B cell (primary cell): ENCODE measurements at regions of chr3 and their contacts with region 1.

Region 1: DNA sequence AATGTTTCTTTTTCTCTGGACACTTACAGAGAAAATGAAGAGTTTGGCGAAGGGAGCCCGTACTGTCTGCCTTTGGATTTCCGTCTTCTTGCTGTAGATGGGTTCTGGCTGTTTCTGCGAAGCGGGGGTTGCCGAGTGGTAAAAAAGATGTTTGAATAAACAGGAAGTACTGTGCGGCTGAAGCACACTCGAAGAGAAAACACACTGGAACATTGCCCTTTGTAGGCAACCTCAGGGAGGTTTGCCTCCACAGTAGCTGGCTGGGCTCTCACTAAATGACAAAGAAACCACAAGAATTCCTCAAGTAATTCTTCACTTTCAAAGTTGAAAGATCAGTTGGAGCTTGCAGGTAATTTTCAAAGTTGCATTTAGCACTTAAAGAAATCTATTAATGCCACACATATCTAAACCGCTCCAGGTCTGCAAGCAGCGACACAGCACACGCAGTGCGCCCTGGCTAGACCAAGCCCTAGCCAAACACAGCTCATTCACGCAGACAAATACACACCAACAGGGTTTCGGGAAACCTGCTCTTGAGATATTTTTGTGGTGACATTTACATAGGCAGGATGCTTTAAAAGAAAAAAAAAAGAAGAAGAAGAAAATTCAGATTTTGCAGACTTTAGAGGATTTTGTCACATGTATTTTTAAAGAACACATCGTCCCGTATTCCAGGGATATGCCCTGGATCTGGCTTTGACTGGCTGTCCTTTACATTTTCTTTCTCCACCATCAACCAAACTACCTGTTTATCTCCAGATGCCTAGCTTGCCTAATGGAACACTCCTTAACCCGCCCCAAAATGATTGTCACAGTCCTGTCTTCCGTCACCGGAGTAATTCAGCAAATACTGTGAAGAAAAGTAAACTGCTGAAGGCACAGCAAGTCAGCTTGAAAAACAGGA is 452.8 kb downstream of the FOXP1 start:
- DNase-seq: peak; percentile 81
- ATAC-seq: peak; percentile 76
- H3K4me3 ChIP-seq: peak overlapping the region; percentile 53 to 91 (median 71)
- H3K4me3 Mint-ChIP-seq: peak overlapping the region; percentile 93
- H3K27ac ChIP-seq: peak overlapping the region; percentile 72 to 91
- H3K27ac Mint-ChIP-seq: peak overlapping the region; percentile 94
- H3K4me1 ChIP-seq: peaks cover 51 to 64% of the 10 kb centered on the region in 2 donors
- H3K4me1 Mint-ChIP-seq: peaks cover 68% of the 10 kb centered on the region
- H3K27me3 ChIP-seq: no peaks in the 10 kb centered on the region
- H3K27me3 Mint-ChIP-seq: no peaks in the 10 kb centered on the region
- CTCF ChIP-seq: no peak

Region 2: DNA sequence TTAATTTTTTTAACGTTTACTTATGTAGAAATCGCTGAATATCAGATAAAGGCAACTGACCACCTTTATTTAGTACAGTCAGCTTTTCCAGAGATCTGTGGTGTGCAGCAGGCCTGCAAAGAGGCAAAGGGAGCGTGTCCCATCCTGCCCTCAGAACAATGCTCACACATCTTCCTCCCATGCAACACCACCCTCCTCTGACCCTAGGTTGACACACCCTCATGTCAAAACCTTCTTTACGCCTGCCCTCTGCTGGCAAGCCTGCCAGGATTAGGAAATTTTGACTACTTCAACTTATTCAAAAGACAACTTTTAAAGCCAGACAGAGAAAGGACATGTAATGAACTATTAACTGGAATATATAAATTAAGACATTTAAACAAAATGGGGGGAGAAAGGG is 60.9 kb before region 1 on chr3:
- CTCF ChIA-PET with region 1: interaction called, 12 read pairs
- POLR2A ChIA-PET with region 1: interaction called, 3 read pairs
- intact Hi-C with region 1: loop called (anchors 1 kb)
- DNase-seq: peak; percentile 83
- ATAC-seq: peak; percentile 48
- H3K4me3 ChIP-seq: no peak overlapping the region
- H3K4me3 Mint-ChIP-seq: peak overlapping the region; percentile 69
- H3K27ac ChIP-seq: peak overlapping the region; percentile 25 to 77
- H3K27ac Mint-ChIP-seq: peak overlapping the region; percentile 84
- H3K4me1 ChIP-seq: peaks cover 55 to 67% of the 10 kb centered on the region in 2 donors
- H3K4me1 Mint-ChIP-seq: peaks cover 79% of the 10 kb centered on the region
- H3K27me3 ChIP-seq: no peaks in the 10 kb centered on the region
- H3K27me3 Mint-ChIP-seq: no peaks in the 10 kb centered on the region
- CTCF ChIP-seq: peak; percentile 78

Region 3: GRCh38 chr3:71117572-71118247 is 13.0 kb before region 1 on chr3:
- CTCF ChIA-PET with region 1: interaction called, 4 read pairs
- POLR2A ChIA-PET with region 1: interaction called, 5 read pairs
- intact Hi-C with region 1: loop called (anchors 1 kb)
- DNase-seq: peak; percentile 47
- ATAC-seq: peak; percentile 66
- H3K4me3 ChIP-seq: no peak overlapping the region
- H3K4me3 Mint-ChIP-seq: peak overlapping the region; percentile 80
- H3K27ac ChIP-seq: peak overlapping the region in 1 of 2 donors; percentile 73
- H3K27ac Mint-ChIP-seq: peak overlapping the region; percentile 93
- H3K4me1 ChIP-seq: peaks cover 28 to 31% of the 10 kb centered on the region in 2 donors
- H3K4me1 Mint-ChIP-seq: peaks cover 81% of the 10 kb centered on the region
- H3K27me3 ChIP-seq: no peaks in the 10 kb centered on the region
- H3K27me3 Mint-ChIP-seq: no peaks in the 10 kb centered on the region
- CTCF ChIP-seq: no peak

Region 4: DNA sequence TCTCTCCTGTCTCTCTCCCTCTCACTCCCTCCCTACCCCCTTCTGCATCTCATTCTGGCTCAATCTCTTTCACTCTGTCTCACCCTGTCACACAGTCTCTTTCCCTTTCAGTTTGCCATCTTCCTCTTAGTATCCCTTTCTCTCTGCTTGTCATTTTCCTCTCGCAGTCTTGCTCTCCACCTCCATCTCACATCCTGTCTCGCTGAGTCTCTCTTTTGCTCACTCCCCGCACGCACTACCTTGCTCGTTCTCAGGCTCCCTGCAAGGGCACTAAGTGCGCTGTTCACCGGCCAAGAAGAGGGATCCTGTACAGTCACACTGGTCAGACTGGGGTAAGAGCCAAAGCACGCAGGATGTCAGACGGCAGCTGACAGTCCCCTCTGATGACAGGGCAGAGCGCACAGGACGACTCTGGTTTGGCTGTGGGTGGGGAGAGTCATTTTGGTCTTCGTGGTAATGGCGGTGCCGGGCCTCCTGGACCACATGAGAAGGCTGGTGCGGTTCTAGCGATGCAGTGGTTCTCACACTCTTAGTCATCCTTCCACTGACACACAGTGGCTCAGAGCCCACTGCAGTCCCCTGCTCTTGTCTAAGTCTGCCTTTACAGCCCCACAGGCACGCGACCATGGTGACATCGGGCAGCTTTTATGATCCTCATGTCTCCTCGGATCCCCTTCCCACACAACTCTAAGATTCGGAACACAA is 96.0 kb after region 1 on chr3:
- CTCF ChIA-PET with region 1: interaction called, 3 read pairs
- POLR2A ChIA-PET with region 1: no interaction called
- intact Hi-C with region 1: loop called (anchors 2 kb)
- DNase-seq: peak; percentile 60
- ATAC-seq: peak; percentile 69
- H3K4me3 ChIP-seq: peak overlapping the region in 4 of 5 experiments; percentile 19 to 52 (median 40)
- H3K4me3 Mint-ChIP-seq: peak overlapping the region; percentile 91
- H3K27ac ChIP-seq: peak overlapping the region; percentile 67 to 93
- H3K27ac Mint-ChIP-seq: peak overlapping the region; percentile 90
- H3K4me1 ChIP-seq: peaks cover 32 to 34% of the 10 kb centered on the region in 2 donors
- H3K4me1 Mint-ChIP-seq: peaks cover 64% of the 10 kb centered on the region
- H3K27me3 ChIP-seq: no peaks in the 10 kb centered on the region
- H3K27me3 Mint-ChIP-seq: no peaks in the 10 kb centered on the region
- CTCF ChIP-seq: no peak